ENCODE measurements at regions of chr13 and their contacts with region 1.

Region 1: GRCh38 chr13:67443923-67444322 is 213.8 kb upstream of the PCDH9 start:
- DNase-seq: no peak

Region 2: GRCh38 chr13:67416047-67416925 is 27.6 kb before region 1 on chr13:
- intact Hi-C with region 1: loop called in 1 of 2 experiments (anchors 2 kb)
- DNase-seq: no peak

Region 3: GRCh38 chr13:67464154-67464553 is 20.2 kb after region 1 on chr13:
- intact Hi-C with region 1: no loop called
- DNase-seq: no peak

Region 4: DNA sequence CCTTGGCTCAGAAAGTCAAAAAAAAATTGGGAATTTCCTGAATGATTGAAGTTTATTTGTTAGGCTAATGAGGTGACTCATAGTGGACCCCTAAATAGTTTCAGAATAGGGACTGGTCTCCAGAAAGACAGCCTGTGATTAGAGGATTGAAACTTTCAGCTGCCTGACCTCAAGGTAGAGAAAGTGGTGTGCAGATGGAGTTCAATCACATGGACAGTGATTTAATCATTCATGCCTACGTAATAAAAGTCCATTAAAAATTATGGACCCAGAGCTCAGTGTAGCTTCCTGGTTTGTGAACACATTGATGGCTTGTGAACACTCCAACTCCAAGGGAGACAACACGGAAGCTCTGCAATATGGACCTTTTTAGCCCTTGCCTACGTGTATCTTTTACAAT is 319.5 kb after region 1 on chr13:
- intact Hi-C with region 1: no loop called
- DNase-seq: no peak